Uterus (tissue), 4 donors: ENCODE measurements at regions of chr18 and their contacts with region 1.

Region 1: DNA sequence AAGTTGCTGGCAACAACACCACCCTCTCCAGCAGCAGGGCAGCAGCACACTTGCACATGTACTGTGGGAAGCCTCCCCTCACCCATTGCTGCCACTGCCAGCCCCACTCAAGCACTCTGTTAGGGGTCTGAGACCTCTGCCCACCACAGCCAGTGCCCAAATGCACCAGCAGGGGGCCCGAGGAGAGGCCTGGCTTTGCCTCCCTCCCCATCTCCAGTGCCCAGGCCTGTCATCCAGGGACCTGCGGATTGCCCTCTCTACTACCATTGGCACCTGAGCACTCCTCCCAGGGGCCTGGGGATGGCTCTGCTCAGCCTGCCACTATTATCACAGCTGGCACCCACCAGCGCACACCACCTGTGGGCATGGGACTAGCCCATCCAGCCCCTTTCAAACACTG is 175.7 kb downstream of the PMAIP1 start:
- DNase-seq: no peak
- H3K4me3 ChIP-seq: no peak overlapping the region
- H3K27ac ChIP-seq: no peak overlapping the region
- H3K4me1 ChIP-seq: no peaks in the 10 kb centered on the region
- H3K27me3 ChIP-seq: no peaks in the 10 kb centered on the region
- CTCF ChIP-seq: no peak
- POLR2A ChIP-seq: no peak

Region 2: GRCh38 chr18:60053747-60054304 is 21.7 kb before region 1 on chr18:
- intact Hi-C with region 1: loop called (anchors 2 kb)
- DNase-seq: no peak
- H3K4me3 ChIP-seq: no peak overlapping the region
- H3K27ac ChIP-seq: no peak overlapping the region
- H3K4me1 ChIP-seq: no peaks in the 10 kb centered on the region
- H3K27me3 ChIP-seq: no peaks in the 10 kb centered on the region
- CTCF ChIP-seq: no peak
- POLR2A ChIP-seq: no peak

Region 3: DNA sequence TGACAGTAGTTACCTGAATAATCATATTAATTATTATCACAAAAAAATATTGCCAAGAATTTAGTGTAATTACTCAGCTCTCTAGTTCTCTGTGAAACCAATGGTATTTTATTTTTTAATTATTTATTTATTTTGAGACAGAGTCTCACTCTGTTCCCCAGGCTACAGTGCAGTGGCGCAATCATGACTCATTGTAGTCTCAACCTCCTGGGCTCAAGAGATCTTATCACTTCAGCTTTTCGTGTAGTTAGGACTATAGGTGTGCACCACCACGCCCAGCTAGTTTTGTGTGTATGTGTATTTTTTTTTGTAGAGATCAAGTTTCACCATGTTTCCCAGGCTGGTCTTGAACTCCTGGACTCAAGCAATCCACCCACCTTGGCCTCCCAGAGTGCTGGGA is 817.4 kb after region 1 on chr18:
- intact Hi-C with region 1: no loop called
- DNase-seq: no peak
- H3K4me3 ChIP-seq: no peak overlapping the region
- H3K27ac ChIP-seq: no peak overlapping the region
- H3K4me1 ChIP-seq: no peaks in the 10 kb centered on the region
- H3K27me3 ChIP-seq: no peaks in the 10 kb centered on the region
- CTCF ChIP-seq: no peak
- POLR2A ChIP-seq: no peak